ENCODE measurements at regions of chr15 and their contacts with region 1.

Region 1: DNA sequence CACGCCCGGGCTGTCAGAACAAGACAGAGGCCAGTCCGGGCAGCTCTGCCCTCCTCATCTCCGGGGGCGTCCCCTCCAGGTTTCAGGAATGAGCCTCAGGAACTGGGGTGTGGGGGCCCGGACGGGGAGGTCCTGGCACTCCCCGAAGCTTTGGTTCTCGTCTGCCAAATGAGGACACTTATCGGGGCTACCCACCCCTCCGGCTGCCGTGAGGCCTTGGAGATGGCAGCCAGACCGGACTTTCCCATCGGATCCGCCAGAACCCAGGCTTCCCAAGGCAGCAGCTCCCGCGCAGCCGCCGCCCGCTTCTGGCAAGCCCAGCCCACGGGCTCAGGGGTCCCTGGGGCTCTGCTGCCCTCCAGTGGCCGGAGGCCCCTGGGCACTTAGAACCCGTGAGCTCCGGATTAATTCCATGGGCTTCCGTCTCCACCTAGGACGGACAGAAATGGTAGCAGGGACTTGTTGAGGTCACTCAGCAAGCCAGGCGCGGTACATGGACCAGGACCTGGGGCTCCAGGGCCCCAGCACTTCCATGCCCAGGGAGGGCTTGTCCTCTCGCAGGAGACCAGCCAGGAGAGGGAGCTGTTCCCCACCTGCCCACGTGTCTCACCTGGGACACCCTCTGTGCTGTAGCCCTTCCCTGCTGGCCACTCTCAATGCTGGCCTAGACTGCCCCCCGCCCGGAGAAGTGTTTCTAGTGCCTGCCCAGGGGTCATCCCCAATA is 89.4 kb downstream of the LINGO1 start:
- DNase-seq: no peak
- H3K4me3 ChIP-seq: peak overlapping the region; percentile 31 to 37
- H3K27ac ChIP-seq: peak overlapping the region; percentile 72
- H3K4me1 ChIP-seq: peaks cover 42% of the 10 kb centered on the region
- H3K27me3 ChIP-seq: no peaks in the 10 kb centered on the region
- CTCF ChIP-seq: peak; percentile 93 to 98 (median 98)
- POLR2A ChIP-seq: no peak

Region 2: DNA sequence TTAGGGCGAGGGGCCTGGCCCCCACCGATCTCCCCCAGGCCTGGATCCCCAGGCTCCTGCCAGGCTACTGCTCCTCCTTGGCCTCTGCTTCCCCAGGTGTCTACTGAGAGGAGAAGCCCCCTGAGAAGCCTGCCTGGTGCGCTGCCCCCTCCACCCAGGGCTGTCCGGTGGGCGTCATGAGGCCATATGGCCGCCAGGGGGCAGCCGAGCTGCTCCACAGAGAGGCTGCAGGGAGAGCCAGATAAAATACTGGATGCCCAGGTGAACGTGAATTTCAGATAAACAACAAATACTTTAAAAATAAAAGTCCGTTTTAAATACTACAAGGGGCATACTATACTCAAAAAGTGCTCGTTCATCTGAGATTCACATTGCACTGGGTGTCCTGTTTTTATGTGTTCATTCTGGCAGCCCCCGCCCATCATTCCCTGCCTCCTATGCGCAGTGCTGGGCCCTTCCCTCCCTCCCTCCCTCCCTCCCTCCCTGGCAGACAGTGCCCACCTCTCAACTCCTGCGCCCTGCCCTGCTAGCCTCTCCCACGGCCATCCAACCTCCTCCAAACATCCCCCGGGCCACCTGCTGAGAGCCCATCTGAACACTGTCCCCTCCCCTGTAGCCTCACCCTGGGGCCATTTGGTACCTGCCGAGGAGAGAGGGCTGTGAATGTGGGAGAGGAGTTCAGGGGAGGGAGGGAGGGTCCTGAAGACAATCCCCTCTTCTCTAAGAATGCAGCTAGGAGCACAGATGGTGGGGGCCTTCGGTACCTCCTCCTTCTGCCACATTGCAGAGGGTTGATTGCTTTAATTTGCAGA is 518.8 kb before region 1 on chr15:
- intact Hi-C with region 1: loop called (anchors 5 kb)
- DNase-seq: no peak
- H3K4me3 ChIP-seq: no peak overlapping the region
- H3K27ac ChIP-seq: no peak overlapping the region
- H3K4me1 ChIP-seq: peaks cover 13% of the 10 kb centered on the region
- H3K27me3 ChIP-seq: no peaks in the 10 kb centered on the region
- CTCF ChIP-seq: peak; percentile 85 to 97 (median 87)
- POLR2A ChIP-seq: no peak

Region 3: GRCh38 chr15:77118882-77119321 is 424.4 kb before region 1 on chr15:
- intact Hi-C with region 1: loop called (anchors 10 kb)
- DNase-seq: no peak
- H3K4me3 ChIP-seq: no peak overlapping the region
- H3K27ac ChIP-seq: no peak overlapping the region
- H3K4me1 ChIP-seq: peaks cover 13% of the 10 kb centered on the region
- H3K27me3 ChIP-seq: no peaks in the 10 kb centered on the region
- CTCF ChIP-seq: peak in 2 of 3 experiments; percentile 62 to 70
- POLR2A ChIP-seq: no peak

Region 4: DNA sequence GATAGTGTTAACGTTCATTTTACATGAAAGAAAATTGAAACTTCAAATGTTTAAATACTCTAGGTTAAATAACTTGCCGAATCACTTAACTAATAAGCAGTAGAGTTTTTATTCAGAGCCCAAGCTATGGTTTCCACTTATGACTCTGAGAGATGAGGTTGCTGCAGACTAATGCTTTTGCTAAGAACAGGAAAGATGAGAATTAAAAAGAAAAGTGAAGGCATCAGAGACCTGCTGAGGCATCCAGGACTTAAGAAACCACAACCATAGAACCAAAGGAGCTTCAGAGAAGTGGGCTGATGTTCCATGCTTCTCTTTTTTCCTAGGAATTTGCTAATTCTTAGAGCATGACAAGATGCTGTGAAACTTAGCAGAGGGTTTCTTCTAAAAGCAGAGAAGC is 113.1 kb before region 1 on chr15:
- intact Hi-C with region 1: no loop called
- DNase-seq: no peak
- H3K4me3 ChIP-seq: no peak overlapping the region
- H3K27ac ChIP-seq: no peak overlapping the region
- H3K4me1 ChIP-seq: peaks cover 10% of the 10 kb centered on the region
- H3K27me3 ChIP-seq: no peaks in the 10 kb centered on the region
- CTCF ChIP-seq: no peak
- POLR2A ChIP-seq: no peak